Activated CD4-positive, alpha-beta memory T cell treated with anti-CD3 and anti-CD28 coated beads, Interleukin-2, amount 10 ng/mL, durations not matched to agents 7 days and 5 days (primary cell): ENCODE measurements at regions of chr14 and their contacts with region 1.

Region 1: DNA sequence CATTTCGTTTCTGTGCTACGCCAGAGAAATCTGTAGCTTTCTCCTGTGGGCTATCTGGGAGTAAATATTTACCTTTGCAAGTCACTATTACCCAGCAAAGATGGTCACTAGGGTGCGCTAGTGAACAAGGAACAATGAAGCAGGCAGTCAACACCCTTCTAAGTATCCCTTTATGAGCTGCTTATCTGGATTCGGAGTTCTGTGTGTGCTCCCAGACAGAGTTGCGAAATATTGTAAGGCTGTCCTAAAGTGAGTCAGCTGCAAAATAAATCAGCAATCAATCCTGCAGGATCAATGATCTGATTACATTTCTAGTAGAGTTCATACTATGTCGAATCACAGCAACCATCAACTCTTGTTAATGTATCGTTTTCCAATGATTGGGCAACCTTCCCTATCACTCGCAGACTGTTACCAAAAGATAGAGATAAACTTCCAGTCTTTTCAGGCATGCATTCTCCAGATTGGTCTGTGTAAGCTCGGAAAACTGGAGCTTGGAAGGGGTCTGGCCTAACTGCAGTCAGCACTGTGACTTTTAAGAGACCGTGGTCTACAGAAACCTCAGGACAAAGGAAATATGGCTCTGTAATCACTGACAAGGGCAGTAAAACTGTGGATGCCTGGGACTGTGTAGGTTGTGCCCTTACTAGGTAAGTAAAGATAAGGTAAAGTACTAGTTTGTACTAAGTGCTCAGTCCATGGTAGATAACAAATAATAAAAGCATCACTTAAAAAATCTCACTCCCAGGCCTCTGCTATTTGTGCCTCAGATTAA is 133.5 kb downstream of the KCNK10 start:
- DNase-seq: peak; percentile 62
- H3K4me3 Mint-ChIP-seq: no peak overlapping the region
- H3K27ac Mint-ChIP-seq: no peak overlapping the region
- H3K4me1 Mint-ChIP-seq: peaks cover 2% of the 10 kb centered on the region
- H3K27me3 Mint-ChIP-seq: peaks cover 12% of the 10 kb centered on the region

Region 2: DNA sequence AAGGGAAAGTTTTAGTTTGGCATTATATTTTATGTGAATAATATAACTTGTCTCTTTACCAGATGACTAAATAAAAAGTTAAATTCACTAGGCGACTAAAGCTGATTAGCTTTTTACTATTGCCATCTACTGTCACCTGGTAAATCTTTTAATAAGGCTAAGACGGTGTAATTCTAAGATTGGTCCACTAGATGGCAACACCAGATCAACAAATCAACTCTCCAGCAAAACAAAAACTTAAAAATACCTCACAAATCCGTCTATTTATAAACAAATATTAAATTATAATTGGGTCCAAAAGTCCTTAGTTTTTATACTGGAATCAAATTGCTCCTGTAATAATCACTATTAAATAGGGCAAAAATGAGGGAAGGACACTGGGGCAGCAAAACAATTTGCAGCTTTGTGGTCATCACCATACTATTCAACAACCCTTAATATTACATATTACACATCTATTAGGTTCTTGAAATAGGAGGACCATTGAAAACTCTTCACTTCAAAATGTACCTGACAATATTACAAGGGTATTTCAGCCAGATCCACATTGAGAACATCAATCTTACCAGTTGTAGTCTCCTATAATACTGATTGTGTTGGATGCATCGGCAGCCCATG is 244.5 kb before region 1 on chr14:
- CTCF ChIA-PET with region 1: interaction called, 35 read pairs
- POLR2A ChIA-PET with region 1: no interaction called
- DNase-seq: no peak
- H3K4me3 Mint-ChIP-seq: no peak overlapping the region
- H3K27ac Mint-ChIP-seq: no peak overlapping the region
- H3K4me1 Mint-ChIP-seq: peaks cover 5% of the 10 kb centered on the region
- H3K27me3 Mint-ChIP-seq: no peaks in the 10 kb centered on the region

Region 3: GRCh38 chr14:88156127-88156526 is 33.5 kb before region 1 on chr14:
- CTCF ChIA-PET with region 1: no interaction called
- POLR2A ChIA-PET with region 1: no interaction called
- DNase-seq: no peak
- H3K4me3 Mint-ChIP-seq: no peak overlapping the region
- H3K27ac Mint-ChIP-seq: no peak overlapping the region
- H3K4me1 Mint-ChIP-seq: no peaks in the 10 kb centered on the region
- H3K27me3 Mint-ChIP-seq: peaks cover 20% of the 10 kb centered on the region

Region 4: DNA sequence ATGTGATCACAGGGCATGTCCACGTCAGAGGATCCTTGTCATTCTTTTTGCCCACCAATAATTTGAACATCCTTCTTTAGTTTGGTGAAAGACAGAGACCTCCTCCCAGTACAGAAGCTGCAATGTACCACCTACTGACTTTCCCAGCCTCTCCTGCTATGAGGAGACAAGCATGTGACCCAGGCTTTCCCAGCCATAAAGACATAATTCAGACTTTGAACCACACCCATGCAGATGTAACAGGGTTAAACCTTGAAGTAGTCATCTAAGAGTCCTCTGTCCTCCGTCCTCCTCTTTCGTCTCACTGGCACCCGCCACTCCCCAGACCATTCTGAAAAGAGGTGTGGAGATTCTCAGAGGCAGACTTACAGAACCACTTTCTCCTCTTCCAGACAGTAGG is 12.7 kb after region 1 on chr14:
- CTCF ChIA-PET with region 1: interaction called, 11 read pairs
- POLR2A ChIA-PET with region 1: no interaction called
- DNase-seq: no peak
- H3K4me3 Mint-ChIP-seq: no peak overlapping the region
- H3K27ac Mint-ChIP-seq: no peak overlapping the region
- H3K4me1 Mint-ChIP-seq: no peaks in the 10 kb centered on the region
- H3K27me3 Mint-ChIP-seq: peaks cover 4% of the 10 kb centered on the region

Region 5: DNA sequence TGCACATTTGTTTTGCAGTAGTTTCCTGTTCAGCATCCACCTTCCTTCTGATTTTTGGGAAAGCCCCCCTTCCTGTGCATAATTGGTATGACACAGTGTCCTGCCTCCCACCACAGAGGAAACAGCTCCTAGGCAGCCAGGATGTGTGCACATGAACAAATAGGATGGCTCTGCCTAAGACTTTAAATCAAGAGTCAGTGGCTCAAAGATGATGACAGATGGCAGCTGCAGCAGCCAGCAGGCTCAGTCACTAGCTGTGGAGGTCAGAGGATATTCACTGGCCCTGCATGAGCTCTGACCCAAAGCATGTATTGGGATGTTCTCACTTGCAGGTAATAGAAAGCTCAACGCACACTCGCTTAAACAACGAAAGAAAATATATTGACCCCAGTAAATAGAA is 43.2 kb after region 1 on chr14:
- CTCF ChIA-PET with region 1: interaction called, 10 read pairs
- POLR2A ChIA-PET with region 1: no interaction called
- DNase-seq: no peak
- H3K4me3 Mint-ChIP-seq: no peak overlapping the region
- H3K27ac Mint-ChIP-seq: no peak overlapping the region
- H3K4me1 Mint-ChIP-seq: no peaks in the 10 kb centered on the region
- H3K27me3 Mint-ChIP-seq: peaks cover 4% of the 10 kb centered on the region

Region 6: DNA sequence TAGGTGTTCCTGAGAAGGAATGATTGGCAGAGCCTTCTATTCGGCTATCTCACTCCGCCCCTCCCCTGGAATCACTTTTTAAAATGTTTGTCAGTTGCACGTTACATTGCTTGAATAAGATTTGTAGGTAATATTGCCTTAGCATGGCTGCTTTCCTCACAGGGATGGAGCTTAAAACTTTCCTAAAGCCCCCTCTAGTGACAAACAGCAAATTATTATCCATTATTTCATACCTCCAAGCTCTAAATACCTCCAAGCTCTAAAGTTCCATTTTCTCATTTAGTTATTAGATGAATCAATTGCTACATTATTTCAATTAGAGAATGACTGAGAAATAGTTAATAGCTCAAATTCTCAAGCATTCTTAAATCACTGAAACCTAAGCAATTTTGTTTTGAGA is 190.8 kb after region 1 on chr14:
- CTCF ChIA-PET with region 1: interaction called, 12 read pairs
- POLR2A ChIA-PET with region 1: interaction called, 3 read pairs
- DNase-seq: no peak
- H3K4me3 Mint-ChIP-seq: no peak overlapping the region
- H3K27ac Mint-ChIP-seq: no peak overlapping the region
- H3K4me1 Mint-ChIP-seq: peaks cover 8% of the 10 kb centered on the region
- H3K27me3 Mint-ChIP-seq: peaks cover 12% of the 10 kb centered on the region